BJ (cell line): ENCODE measurements at regions of chr9 and their contacts with region 1.

Region 1: DNA sequence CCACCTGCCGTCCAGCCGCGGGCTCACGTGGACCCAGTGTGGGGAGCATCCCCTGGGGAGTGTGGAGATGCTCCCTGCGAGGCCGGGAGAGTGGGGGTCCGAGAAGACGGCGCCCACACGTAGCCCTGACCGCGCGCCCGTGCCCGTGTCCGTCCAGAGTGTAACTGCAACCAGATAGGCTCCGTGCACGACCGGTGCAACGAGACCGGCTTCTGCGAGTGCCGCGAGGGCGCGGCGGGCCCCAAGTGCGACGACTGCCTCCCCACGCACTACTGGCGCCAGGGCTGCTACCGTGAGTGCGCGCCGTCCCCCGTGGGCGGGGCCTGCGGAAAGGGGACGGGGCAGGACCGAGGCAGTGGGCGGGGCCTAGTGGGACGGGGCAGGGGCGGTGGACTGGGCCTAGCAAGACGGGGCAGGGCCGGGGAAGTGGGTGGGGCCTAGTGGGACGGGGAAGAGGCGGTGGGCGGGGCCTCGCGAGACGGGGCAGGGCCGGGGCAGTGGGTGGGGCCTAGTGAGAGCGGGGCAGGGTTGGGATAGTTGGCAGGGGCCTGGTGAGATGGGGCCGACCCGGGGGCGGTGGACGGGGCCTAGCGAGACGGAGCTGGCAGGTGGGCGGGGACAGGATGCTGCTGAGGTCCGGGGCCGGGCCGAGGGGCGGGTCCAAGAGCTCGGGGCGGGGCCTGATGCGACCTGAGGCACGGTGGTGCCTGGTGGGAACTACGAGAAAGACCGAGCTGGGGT is 79.1 kb downstream of the NTNG2 start:
- DNase-seq: peak; percentile 42
- H3K4me3 ChIP-seq: peak overlapping the region; percentile 51
- H3K27me3 ChIP-seq: peaks cover 33% of the 10 kb centered on the region
- CTCF ChIP-seq: no peak

Region 2: DNA sequence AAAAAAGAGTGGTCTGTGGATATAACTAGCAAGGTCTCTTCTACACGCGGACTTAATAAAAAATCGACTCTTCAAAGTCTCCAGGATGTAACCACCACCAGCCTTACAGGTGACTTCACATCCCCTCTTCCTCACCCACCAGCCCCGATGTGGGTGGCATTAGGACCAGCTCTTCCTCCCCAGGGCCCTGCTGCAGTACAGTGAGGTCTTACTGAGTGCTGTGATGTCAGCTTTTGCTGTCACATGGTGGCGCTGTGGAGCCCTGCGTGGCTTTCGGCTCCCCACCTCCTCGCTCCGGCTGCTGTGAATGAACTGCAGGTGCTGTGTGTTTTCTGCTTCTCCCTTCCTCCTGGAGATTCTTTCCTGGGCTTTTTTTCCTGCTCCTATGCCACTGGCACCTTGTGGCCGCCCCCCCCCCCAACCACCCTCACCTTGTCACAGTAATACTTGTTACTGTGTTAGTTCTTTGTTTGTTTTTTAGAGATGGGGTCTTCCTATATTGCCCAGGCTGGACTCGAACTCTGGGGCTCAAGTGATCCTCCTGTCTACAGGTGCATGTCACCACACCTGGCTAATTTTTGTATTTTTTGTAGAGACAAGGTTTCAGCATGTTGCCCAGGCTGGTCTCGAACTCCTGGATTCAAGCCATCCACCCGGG is 485.3 kb before region 1 on chr9:
- CTCF ChIA-PET with region 1: interaction called, 248 read pairs
- POLR2A ChIA-PET with region 1: no interaction called
- DNase-seq: no peak
- H3K4me3 ChIP-seq: no peak overlapping the region
- H3K27me3 ChIP-seq: peaks cover 9% of the 10 kb centered on the region
- CTCF ChIP-seq: peak; percentile 90

Region 3: DNA sequence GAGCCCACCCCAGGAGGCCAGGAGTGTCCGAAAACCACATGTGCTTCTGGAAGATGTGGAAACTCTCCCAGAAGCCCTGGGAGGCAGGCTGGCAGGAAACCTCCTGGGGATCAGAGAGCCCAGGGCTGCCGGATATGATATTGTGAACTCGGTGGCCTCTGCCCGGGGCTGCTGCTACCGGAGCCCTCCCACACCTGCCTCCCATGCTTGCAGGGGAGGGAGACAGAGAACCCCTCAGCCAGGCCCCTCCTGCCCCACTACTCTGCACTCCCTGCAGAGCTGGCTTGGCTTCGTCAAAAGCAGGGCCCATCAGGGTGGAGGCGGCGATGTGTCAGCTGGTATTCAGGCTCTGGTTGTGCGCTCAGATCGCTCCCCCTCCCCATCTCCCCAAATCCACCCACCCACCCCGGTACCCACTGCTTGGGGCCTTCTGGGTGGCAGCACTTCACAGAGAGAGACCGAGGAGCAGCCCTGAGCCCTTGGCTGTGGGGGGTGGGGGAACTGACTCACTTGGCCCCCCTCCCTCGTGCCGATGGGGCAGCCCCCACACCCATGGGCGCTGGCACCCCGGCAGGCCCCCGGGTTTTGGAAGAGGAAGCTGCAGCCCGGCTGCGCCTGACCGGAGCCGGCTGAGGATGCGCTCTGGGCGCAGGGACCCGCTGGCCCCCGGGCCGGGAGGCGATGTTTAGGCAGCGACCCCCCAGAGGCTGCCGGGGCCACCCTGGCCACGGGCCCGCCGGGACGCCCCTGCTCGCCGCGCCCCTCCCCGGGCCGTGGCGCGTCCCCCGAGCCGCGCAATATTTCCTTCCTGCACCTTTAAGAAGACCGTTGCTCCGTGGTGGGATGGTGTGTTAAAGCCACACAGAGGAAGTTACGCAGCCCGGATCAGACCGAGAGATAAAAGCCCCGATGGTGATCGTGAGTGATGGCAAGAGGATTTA is 79.9 kb before region 1 on chr9:
- CTCF ChIA-PET with region 1: interaction called, 110 read pairs
- POLR2A ChIA-PET with region 1: no interaction called
- DNase-seq: no peak
- H3K4me3 ChIP-seq: peak overlapping the region; percentile 48
- H3K27me3 ChIP-seq: peaks cover 36% of the 10 kb centered on the region
- CTCF ChIP-seq: no peak

Region 4: GRCh38 chr9:132169672-132170392 is 71.1 kb before region 1 on chr9:
- CTCF ChIA-PET with region 1: interaction called, 110 read pairs
- POLR2A ChIA-PET with region 1: no interaction called
- DNase-seq: no peak
- H3K4me3 ChIP-seq: no peak overlapping the region
- H3K27me3 ChIP-seq: peaks cover 23% of the 10 kb centered on the region
- CTCF ChIP-seq: peak; percentile 86

Region 5: DNA sequence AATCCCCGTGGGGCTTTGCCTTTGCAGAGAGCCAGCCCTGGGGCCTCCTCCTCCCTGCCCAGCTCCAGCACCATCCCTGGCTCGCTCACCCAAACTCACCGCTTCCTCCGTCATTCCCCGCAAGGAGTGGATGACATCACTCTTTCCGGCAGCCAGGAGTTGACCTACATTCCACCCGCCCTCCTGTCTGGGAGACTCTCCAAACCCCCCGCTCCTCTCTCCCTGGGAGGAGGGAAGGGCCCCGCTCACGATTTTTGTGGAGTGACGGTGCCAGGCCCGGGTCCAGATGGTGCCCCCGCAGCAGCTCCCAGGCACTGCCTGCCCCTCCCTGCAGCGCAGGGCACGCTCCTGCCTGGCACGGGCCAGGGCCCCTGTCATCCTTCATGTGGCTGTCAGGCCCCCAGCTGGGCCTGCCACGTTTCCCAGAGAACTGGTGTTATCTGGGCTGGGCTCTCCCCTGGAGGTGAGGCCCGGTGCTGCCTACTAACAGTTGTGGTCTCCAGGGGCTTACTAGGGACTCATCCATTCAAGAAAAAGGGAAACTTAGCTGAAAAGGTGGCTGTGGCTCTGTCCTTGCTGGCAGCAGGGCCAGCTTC is 26.8 kb before region 1 on chr9:
- CTCF ChIA-PET with region 1: interaction called, 23 read pairs
- POLR2A ChIA-PET with region 1: no interaction called
- DNase-seq: peak; percentile 65
- H3K4me3 ChIP-seq: no peak overlapping the region
- H3K27me3 ChIP-seq: peaks cover 11% of the 10 kb centered on the region; the same call in 1 of the 2 replicates
- CTCF ChIP-seq: no peak

Region 6: DNA sequence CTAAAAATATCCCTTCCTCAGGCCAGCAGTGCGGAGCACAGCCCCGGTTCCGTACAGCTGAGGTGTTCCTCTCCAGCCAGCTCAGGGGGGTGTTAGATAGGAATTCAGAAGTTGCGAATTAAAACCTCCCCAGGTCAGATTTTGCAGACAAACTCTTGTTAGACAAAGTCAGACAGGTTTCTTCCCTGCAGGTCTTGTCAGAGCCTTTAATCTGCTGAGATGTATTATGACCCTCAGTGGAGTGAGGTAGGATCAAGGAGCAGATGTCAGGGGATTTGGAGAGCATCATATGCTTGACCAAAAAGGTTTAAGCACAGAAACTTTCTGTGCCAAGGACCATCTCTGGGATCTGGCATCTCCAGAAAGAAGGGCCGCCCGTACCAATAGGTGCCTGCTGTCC is 19.0 kb before region 1 on chr9:
- CTCF ChIA-PET with region 1: interaction called, 23 read pairs
- POLR2A ChIA-PET with region 1: no interaction called
- DNase-seq: no peak
- H3K4me3 ChIP-seq: no peak overlapping the region
- H3K27me3 ChIP-seq: peaks cover 34% of the 10 kb centered on the region
- CTCF ChIP-seq: no peak

Region 7: GRCh38 chr9:132228062-132228461 is 12.9 kb before region 1 on chr9:
- CTCF ChIA-PET with region 1: interaction called, 16 read pairs
- POLR2A ChIA-PET with region 1: no interaction called
- DNase-seq: no peak
- H3K4me3 ChIP-seq: no peak overlapping the region
- H3K27me3 ChIP-seq: peaks cover 29% of the 10 kb centered on the region
- CTCF ChIP-seq: no peak

Region 8: DNA sequence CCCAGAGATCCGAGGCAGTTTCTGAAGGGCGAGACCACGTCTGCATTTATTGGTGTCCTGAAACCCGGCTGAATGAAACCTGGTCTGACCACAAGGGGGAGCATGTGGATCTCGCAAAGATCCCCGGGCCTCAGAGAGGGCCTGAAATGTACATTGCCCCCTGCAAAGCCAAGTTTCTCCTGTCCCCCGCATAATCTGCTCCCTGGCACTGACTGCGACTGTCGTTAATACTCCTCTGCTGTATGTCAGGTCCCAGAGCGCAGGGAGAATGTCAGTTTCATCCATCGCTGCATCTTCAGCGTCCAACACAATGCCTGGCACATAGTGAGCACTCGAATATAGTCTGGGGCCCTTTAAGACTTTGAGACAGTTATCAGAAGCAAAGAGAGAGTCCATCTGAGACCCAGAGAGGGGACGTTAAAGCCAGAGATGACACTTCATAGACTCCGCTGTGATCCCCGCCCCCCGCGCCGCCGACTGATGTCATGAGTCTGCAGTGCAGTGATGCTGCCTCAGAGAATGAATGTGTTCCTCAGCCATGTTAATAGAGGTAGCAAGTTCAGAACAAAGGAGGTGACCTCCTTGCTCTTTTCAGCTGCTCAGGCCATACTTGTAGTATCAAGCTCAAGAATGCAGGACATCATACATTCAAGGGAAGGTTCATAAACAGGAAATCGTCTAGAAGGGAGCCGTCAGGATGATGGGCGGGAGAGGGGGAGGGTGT is 267.0 kb after region 1 on chr9:
- CTCF ChIA-PET with region 1: no interaction called
- POLR2A ChIA-PET with region 1: no interaction called
- DNase-seq: no peak
- H3K4me3 ChIP-seq: no peak overlapping the region
- H3K27me3 ChIP-seq: peaks cover 23% of the 10 kb centered on the region
- CTCF ChIP-seq: peak; percentile 84